IMR-90 (cell line): ENCODE measurements at regions of chr17 and their contacts with region 1.

Region 1: DNA sequence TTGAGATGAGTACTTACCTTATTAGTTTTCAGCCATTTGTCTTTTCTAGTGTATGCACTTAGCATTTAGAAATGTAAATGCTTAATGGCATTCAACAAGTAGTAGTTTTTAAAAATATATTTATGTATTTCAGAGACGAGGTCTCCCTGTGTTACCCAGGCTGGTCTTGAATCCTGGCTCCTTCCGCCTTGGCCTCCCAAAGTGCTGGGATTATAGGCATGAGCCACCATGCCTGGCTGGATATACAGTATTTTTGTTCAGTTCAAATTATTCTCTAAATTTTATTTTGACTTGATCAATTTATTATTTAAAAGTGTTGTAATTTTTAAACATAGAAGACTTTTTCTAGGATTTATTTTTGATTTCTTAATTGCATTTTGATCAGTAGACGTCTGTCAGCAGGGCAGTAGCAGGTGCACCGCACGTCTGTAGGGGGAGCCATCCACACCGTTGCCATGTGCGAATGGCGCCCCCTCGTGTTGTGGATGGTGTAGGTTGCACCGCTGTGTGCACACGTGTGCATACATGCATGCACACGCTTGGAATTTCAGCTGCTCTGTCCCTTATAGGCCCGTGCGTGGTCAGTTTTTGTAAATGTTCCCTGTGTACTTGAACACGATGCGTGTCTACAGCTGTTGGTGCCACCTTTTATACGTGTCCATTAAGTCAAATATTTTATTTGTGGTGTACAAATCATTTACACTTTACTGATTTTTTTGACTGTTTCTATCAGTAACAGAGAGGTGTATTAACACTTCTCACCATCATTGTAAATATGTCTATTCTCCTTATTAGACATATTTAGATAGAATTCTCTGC is 30.6 kb downstream of the RPTOR start:
- DNase-seq: peak; percentile 89
- ATAC-seq: peak; percentile 98
- H3K4me3 ChIP-seq: no peak overlapping the region
- H3K27ac ChIP-seq: no peak overlapping the region
- H3K4me1 ChIP-seq: peaks cover 5% of the 10 kb centered on the region; the same call in 1 of the 2 replicates
- H3K27me3 ChIP-seq: no peaks in the 10 kb centered on the region
- CTCF ChIP-seq: peak; percentile 100; the same call in 1 of the 2 replicates
- POLR2A ChIP-seq: peak; percentile 69; the same call in 1 of the 2 replicates
- RAD21 ChIP-seq: peak; percentile 100

Region 2: DNA sequence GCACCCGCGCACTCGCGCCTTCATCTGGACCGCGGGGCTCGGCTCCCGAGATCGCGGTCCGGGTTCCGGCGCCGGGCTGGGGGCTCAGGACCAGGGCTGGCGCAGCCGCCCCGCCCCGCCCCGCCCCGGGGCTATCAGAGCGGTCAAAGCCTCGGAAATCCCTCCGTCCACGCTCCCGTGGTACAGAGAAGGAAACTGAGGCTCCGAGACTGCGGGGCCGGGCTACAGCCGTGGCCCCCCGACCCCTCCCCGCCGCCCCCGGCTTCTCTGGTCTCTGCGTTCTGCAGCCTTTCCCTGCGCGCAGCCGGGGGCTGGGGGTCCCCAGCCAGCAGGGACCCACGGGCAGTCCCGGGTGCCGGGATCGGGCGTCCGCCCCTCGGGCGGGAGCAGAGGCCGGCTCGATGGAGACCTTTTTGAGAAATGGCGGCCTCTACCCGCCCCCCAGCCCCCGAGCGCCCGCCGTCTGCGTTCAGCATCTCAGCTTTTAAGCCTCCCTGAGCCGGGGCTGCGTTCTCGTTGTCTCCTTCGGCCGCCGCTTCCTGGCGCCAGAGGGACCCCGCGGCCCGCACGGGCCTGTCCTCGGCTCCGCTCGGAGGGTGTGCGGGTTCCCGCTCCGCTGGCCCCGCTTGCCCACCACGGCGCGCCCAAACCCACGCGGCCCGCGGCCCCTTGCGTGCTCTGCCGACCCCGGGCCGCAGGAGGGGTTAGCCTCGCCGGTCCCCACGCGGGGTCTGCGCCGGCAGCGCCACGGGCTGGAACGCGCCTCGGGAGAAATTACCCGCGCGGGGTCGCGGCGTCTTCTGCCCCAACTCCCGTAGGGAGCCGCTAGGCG is 97.4 kb before region 1 on chr17:
- CTCF ChIA-PET with region 1: interaction called, 3 read pairs
- POLR2A ChIA-PET with region 1: no interaction called
- dilution Hi-C with region 1: no loop called
- in situ Hi-C with region 1: no loop called
- intact Hi-C with region 1: loop called (anchors 1 kb)
- DNase-seq: peak; percentile 59
- ATAC-seq: peak; percentile 73
- H3K4me3 ChIP-seq: peak overlapping the region; percentile 47
- H3K27ac ChIP-seq: no peak overlapping the region
- H3K4me1 ChIP-seq: peaks cover 4% of the 10 kb centered on the region; the same call in 1 of the 2 replicates
- H3K27me3 ChIP-seq: peaks cover 63% of the 10 kb centered on the region
- CTCF ChIP-seq: peak; percentile 79
- POLR2A ChIP-seq: no peak
- RAD21 ChIP-seq: peak; percentile 83

Region 3: GRCh38 chr17:80632046-80632581 is 56.8 kb after region 1 on chr17:
- CTCF ChIA-PET with region 1: no interaction called
- POLR2A ChIA-PET with region 1: no interaction called
- dilution Hi-C with region 1: no loop called
- in situ Hi-C with region 1: no loop called
- intact Hi-C with region 1: no loop called
- DNase-seq: peak; percentile 17
- ATAC-seq: no peak; the same call in 1 of the 2 replicates
- H3K4me3 ChIP-seq: no peak overlapping the region
- H3K27ac ChIP-seq: no peak overlapping the region
- H3K4me1 ChIP-seq: peaks cover 4% of the 10 kb centered on the region; the same call in 1 of the 2 replicates
- H3K27me3 ChIP-seq: no peaks in the 10 kb centered on the region
- CTCF ChIP-seq: no peak
- POLR2A ChIP-seq: no peak
- RAD21 ChIP-seq: no peak